CD4-positive, alpha-beta T cell (primary cell): ENCODE measurements at regions of chr1 and their contacts with region 1.

Region 1: GRCh38 chr1:165914136-165914798 is 86.9 kb downstream of the UCK2 start:
- DNase-seq: peak; percentile 39 to 85 (median 56)
- ATAC-seq: peak; percentile 96
- H3K4me3 ChIP-seq: no peak overlapping the region
- H3K4me3 Mint-ChIP-seq: no peak overlapping the region
- H3K27ac ChIP-seq: no peak overlapping the region
- H3K27ac Mint-ChIP-seq: no peak overlapping the region
- H3K4me1 ChIP-seq: no peaks in the 10 kb centered on the region
- H3K4me1 Mint-ChIP-seq: peaks cover 4% of the 10 kb centered on the region
- H3K27me3 ChIP-seq: no peaks in the 10 kb centered on the region
- H3K27me3 Mint-ChIP-seq: peaks cover 3% of the 10 kb centered on the region
- CTCF ChIP-seq: peak; percentile 93

Region 2: GRCh38 chr1:165392634-165393571 is 521.4 kb before region 1 on chr1:
- CTCF ChIA-PET with region 1: no interaction called
- POLR2A ChIA-PET with region 1: no interaction called
- intact Hi-C with region 1: loop called (anchors 1 kb)
- DNase-seq: peak; percentile 83 to 97 (median 88)
- ATAC-seq: peak; percentile 99
- H3K4me3 ChIP-seq: peak overlapping the region; percentile 23
- H3K4me3 Mint-ChIP-seq: peak overlapping the region; percentile 75
- H3K27ac ChIP-seq: no peak overlapping the region
- H3K27ac Mint-ChIP-seq: peak overlapping the region; percentile 75
- H3K4me1 ChIP-seq: peaks cover 19% of the 10 kb centered on the region
- H3K4me1 Mint-ChIP-seq: peaks cover 17% of the 10 kb centered on the region
- H3K27me3 ChIP-seq: peaks cover 56 to 72% of the 10 kb centered on the region in 2 experiments
- H3K27me3 Mint-ChIP-seq: peaks cover 92% of the 10 kb centered on the region
- CTCF ChIP-seq: peak; percentile 98

Region 3: GRCh38 chr1:165697881-165698760 is 216.1 kb before region 1 on chr1 and contains the start of gene ALDH9A1:
- CTCF ChIA-PET with region 1: no interaction called
- POLR2A ChIA-PET with region 1: no interaction called
- intact Hi-C with region 1: loop called in 1 of 2 experiments (anchors 1 kb)
- DNase-seq: peak; percentile 70 to 90 (median 80)
- ATAC-seq: peak; percentile 91
- H3K4me3 ChIP-seq: peak within 1 kb of the TSS; percentile 65
- H3K4me3 Mint-ChIP-seq: peak within 1 kb of the TSS; percentile 98
- H3K27ac ChIP-seq: peak within 1 kb of the TSS; percentile 81 to 90
- H3K27ac Mint-ChIP-seq: peak within 1 kb of the TSS; percentile 92
- H3K4me1 ChIP-seq: peaks cover 26% of the 10 kb centered on the region
- H3K4me1 Mint-ChIP-seq: peaks cover 45% of the 10 kb centered on the region
- H3K27me3 ChIP-seq: no peaks in the 10 kb centered on the region
- H3K27me3 Mint-ChIP-seq: no peaks in the 10 kb centered on the region
- CTCF ChIP-seq: no peak
- total RNA-seq, gene ALDH9A1: 33.9 to 35.5 TPM

Region 4: GRCh38 chr1:165768513-165769394 is 145.5 kb before region 1 on chr1 and contains the start of gene TMCO1:
- CTCF ChIA-PET with region 1: interaction called, 3 read pairs
- POLR2A ChIA-PET with region 1: interaction called, 3 read pairs
- intact Hi-C with region 1: loop called in 1 of 2 experiments (anchors 5 kb)
- DNase-seq: peak; percentile 85 to 99 (median 90)
- ATAC-seq: peak; percentile 93
- H3K4me3 ChIP-seq: peak within 1 kb of the TSS; percentile 76
- H3K4me3 Mint-ChIP-seq: peak within 1 kb of the TSS; percentile 95
- H3K27ac ChIP-seq: peak within 1 kb of the TSS; percentile 84 to 92
- H3K27ac Mint-ChIP-seq: peak within 1 kb of the TSS; percentile 93
- H3K4me1 ChIP-seq: peaks cover 28% of the 10 kb centered on the region
- H3K4me1 Mint-ChIP-seq: peaks cover 75% of the 10 kb centered on the region
- H3K27me3 ChIP-seq: no peaks in the 10 kb centered on the region
- H3K27me3 Mint-ChIP-seq: no peaks in the 10 kb centered on the region
- CTCF ChIP-seq: no peak
- total RNA-seq, gene TMCO1: 25.7 to 27.4 TPM

Region 5: GRCh38 chr1:165928075-165928731 is 13.9 kb after region 1 on chr1:
- CTCF ChIA-PET with region 1: interaction called, 13 read pairs
- POLR2A ChIA-PET with region 1: no interaction called
- intact Hi-C with region 1: no loop called
- DNase-seq: peak in 12 of 14 experiments; percentile 9 to 75 (median 22)
- ATAC-seq: peak; percentile 61
- H3K4me3 ChIP-seq: no peak overlapping the region
- H3K4me3 Mint-ChIP-seq: no peak overlapping the region
- H3K27ac ChIP-seq: no peak overlapping the region
- H3K27ac Mint-ChIP-seq: no peak overlapping the region
- H3K4me1 ChIP-seq: no peaks in the 10 kb centered on the region
- H3K4me1 Mint-ChIP-seq: no peaks in the 10 kb centered on the region
- H3K27me3 ChIP-seq: peaks cover 0 to 3% of the 10 kb centered on the region in 2 experiments
- H3K27me3 Mint-ChIP-seq: peaks cover 40% of the 10 kb centered on the region
- CTCF ChIP-seq: peak; percentile 61